Body of pancreas (tissue), 4 donors: ENCODE measurements at regions of chr1 and their contacts with region 1.

Region 1: GRCh38 chr1:88655685-88656299 is 28.3 kb upstream of the PKN2 start:
- DNase-seq: no peak
- ATAC-seq: no peak
- H3K4me3 ChIP-seq: no peak overlapping the region
- H3K27ac ChIP-seq: no peak overlapping the region
- H3K4me1 ChIP-seq: no peaks in the 10 kb centered on the region
- H3K27me3 ChIP-seq: no peaks in the 10 kb centered on the region
- CTCF ChIP-seq: peak; percentile 35 to 74 (median 55)
- POLR2A ChIP-seq: no peak

Region 2: GRCh38 chr1:88877382-88877825 is 221.6 kb after region 1 on chr1:
- intact Hi-C with region 1: loop called (anchors 10 kb)
- DNase-seq: no peak
- ATAC-seq: peak; percentile 38
- H3K4me3 ChIP-seq: no peak overlapping the region
- H3K27ac ChIP-seq: peak overlapping the region in 2 of 4 donors; percentile 30 to 38
- H3K4me1 ChIP-seq: peaks cover 29% of the 10 kb centered on the region
- H3K27me3 ChIP-seq: no peaks in the 10 kb centered on the region
- CTCF ChIP-seq: peak; percentile 15 to 73 (median 52)
- POLR2A ChIP-seq: no peak